H1 (cell line): ENCODE measurements at regions of chr1 and their contacts with region 1.

Region 1: GRCh38 chr1:159071970-159072582 is 4.5 kb downstream of the AIM2 start:
- DNase-seq: no peak
- H3K4me3 ChIP-seq: no peak overlapping the region
- H3K27ac ChIP-seq: no peak overlapping the region
- H3K4me1 ChIP-seq: peaks cover 0 to 6% (median 0%) of the 10 kb centered on the region in 4 experiments; a peak in 1 of 7 replicates
- H3K27me3 ChIP-seq: no peaks in the 10 kb centered on the region
- CTCF ChIP-seq: peak in 2 of 3 experiments; percentile 57 to 69; a peak in 2 of 4 replicates
- EP300 ChIP-seq: no peak
- POLR2A ChIP-seq: no peak
- RAD21 ChIP-seq: peak; percentile 84 to 91

Region 2: DNA sequence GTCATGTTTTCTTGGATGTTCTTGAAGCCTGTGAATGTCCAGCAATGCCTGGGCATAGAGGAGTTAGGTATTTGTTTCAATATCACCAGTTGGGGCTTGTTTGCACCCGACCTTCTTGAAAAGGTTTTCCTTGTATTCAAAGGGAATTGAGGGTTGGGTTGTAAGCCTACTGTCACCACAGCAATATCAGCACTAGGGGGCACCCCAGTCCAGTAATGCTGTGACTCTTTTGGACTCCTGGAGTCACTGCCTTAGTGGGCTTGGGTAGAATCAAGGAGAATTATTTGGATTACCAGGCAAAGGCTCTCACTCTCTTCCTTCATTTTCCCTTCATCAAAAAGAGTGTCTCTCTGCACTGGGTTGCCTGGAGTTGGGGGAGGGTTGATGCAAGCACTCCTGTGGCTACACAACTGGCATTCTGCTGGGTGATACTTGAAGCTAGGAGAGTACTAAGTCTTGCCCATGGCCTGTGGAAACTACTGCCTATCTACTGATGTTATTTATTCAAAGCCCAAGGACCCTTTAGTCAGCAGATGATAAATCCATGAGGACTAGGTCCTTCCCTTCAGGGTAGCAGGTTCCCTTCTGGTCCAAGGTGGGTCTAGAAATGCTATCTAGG is 565.6 kb before region 1 on chr1:
- CTCF ChIA-PET with region 1: interaction called, 12 read pairs
- POLR2A ChIA-PET with region 1: no interaction called
- DNase-seq: peak; percentile 44 to 87
- H3K4me3 ChIP-seq: no peak overlapping the region
- H3K27ac ChIP-seq: no peak overlapping the region
- H3K4me1 ChIP-seq: no peaks in the 10 kb centered on the region; a peak in 1 of 7 replicates
- H3K27me3 ChIP-seq: no peaks in the 10 kb centered on the region
- CTCF ChIP-seq: peak; percentile 50 to 84 (median 84)
- EP300 ChIP-seq: no peak
- POLR2A ChIP-seq: no peak
- RAD21 ChIP-seq: peak; percentile 93 to 95

Region 3: GRCh38 chr1:159040893-159041724 is 31.0 kb before region 1 on chr1:
- CTCF ChIA-PET with region 1: no interaction called
- POLR2A ChIA-PET with region 1: no interaction called
- DNase-seq: no peak
- H3K4me3 ChIP-seq: no peak overlapping the region
- H3K27ac ChIP-seq: no peak overlapping the region
- H3K4me1 ChIP-seq: no peaks in the 10 kb centered on the region
- H3K27me3 ChIP-seq: no peaks in the 10 kb centered on the region
- CTCF ChIP-seq: no peak
- EP300 ChIP-seq: no peak
- POLR2A ChIP-seq: no peak
- RAD21 ChIP-seq: no peak

Region 4: DNA sequence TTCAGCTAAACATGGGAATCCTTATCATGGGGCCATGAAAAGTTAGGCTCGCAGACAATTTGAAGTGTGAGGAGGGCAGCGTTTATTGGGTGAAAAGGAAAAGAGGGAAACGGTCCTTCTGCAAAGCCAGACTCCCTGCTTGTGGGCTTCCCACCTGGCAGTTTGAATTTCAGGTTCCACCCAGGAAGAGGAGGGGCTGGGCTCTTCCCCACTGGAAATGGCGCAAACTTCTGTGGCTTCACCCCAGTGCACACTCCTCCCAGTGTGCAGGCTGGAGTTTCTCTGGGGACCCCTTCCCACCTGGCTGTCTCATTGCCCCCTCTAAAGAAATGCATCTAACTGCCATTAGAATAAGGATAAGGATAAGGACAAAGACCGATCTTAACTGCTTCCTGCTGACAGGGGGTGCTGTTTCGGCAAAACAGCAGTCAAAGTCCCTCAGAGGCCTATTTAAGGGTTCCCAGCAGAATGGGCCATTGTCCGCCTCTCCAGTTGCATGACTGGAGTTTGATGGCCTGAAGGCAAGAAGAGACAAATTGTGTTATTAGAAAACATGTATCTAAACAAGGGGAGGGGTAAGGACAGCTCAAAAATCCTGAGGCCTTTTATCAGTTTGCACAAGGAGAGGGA is 15.9 kb before region 1 on chr1:
- CTCF ChIA-PET with region 1: interaction called, 18 read pairs
- POLR2A ChIA-PET with region 1: no interaction called
- DNase-seq: peak; percentile 9 to 54
- H3K4me3 ChIP-seq: no peak overlapping the region
- H3K27ac ChIP-seq: no peak overlapping the region
- H3K4me1 ChIP-seq: no peaks in the 10 kb centered on the region
- H3K27me3 ChIP-seq: no peaks in the 10 kb centered on the region
- CTCF ChIP-seq: peak in 2 of 3 experiments; percentile 40 to 63; a peak in 3 of 4 replicates
- EP300 ChIP-seq: no peak
- POLR2A ChIP-seq: no peak
- RAD21 ChIP-seq: peak; percentile 8 to 34; a peak in 2 of 4 replicates

Region 5: DNA sequence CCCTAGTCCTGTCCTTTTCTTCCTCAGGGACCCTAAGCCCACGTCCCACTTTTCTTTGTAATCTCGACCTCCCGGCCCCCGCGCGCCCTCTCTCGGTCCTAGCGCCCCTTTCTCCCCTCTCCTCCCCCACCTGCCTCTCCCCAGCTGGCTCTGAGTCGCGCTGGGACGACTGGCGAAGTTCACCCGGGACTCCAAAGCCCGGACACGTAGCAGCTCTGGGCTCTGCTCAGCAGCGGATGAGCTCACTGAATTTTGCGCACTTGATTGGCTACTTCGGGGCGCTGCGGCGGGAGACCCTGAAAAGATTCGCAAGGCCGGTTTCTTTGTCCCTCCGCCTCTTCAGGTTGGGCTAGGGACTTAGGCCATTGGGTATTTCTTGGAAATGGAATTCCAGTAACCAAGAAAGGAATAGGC is 116.3 kb after region 1 on chr1:
- CTCF ChIA-PET with region 1: no interaction called
- POLR2A ChIA-PET with region 1: no interaction called
- DNase-seq: peak; percentile 88 to 89
- H3K4me3 ChIP-seq: peak overlapping the region; percentile 57 to 81 (median 71)
- H3K27ac ChIP-seq: peak overlapping the region; percentile 58
- H3K4me1 ChIP-seq: peaks cover 0 to 3% (median under 1%) of the 10 kb centered on the region in 4 experiments; a peak in 3 of 7 replicates
- H3K27me3 ChIP-seq: no peaks in the 10 kb centered on the region
- CTCF ChIP-seq: no peak
- EP300 ChIP-seq: no peak; a peak in 1 of 3 replicates
- POLR2A ChIP-seq: peak in 1 of 2 experiments; percentile 59; a peak in 2 of 3 replicates
- RAD21 ChIP-seq: no peak